SK-N-SH (cell line): ENCODE measurements at regions of chr4 and their contacts with region 1.

Region 1: DNA sequence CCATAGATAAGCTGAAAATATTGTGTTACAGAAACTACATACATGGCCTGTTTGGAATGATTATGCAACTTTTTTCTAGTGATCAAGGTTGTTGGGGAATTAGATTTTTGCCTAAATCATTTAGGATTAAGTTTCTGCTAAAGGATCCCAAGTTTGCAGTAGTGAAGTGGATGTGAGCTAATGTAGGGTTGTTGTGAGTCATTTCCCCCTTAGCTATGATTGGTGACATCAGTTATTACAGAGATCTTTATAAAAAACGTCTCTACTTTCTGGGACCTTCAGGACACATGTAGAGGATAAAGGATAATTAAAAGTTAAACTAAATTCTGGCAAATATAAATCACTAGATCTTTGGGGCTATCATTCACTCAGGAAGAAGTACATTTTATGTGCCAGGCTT is 133.3 kb downstream of the GATB start:
- DNase-seq: no peak
- H3K4me3 ChIP-seq: no peak overlapping the region
- H3K27ac ChIP-seq: no peak overlapping the region
- H3K4me1 ChIP-seq: peaks cover 0 to 12% of the 10 kb centered on the region in 2 experiments; a peak in 2 of 4 replicates
- H3K27me3 ChIP-seq: no peaks in the 10 kb centered on the region
- CTCF ChIP-seq: no peak
- EP300 ChIP-seq: no peak
- RAD21 ChIP-seq: no peak

Region 2: DNA sequence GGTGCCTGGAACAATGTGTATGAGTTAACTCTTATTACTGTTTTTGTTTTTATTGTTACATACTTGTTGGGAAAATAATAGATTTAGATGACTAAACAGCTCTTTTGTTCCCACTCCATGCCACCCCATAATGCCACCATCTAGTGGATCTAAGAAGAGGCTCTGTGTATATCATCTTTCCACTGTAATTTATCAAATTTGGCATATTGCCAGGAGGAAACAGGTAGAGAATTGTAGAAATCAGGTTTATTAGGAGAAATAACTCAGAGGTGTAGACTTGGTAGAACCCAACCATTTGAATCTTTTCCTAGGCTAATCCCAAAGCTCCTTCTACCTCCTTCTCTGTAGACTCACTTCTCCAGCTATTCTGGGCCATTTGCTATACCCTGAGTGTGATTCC is 17.3 kb before region 1 on chr4:
- CTCF ChIA-PET with region 1: no interaction called
- POLR2A ChIA-PET with region 1: no interaction called
- DNase-seq: no peak
- H3K4me3 ChIP-seq: no peak overlapping the region
- H3K27ac ChIP-seq: no peak overlapping the region
- H3K4me1 ChIP-seq: peaks cover 0 to 12% of the 10 kb centered on the region in 2 experiments; a peak in 2 of 4 replicates
- H3K27me3 ChIP-seq: no peaks in the 10 kb centered on the region
- CTCF ChIP-seq: no peak
- EP300 ChIP-seq: no peak
- RAD21 ChIP-seq: no peak

Region 3: GRCh38 chr4:151644622-151645021 is 17.1 kb after region 1 on chr4:
- CTCF ChIA-PET with region 1: interaction called, 10 read pairs
- POLR2A ChIA-PET with region 1: no interaction called
- DNase-seq: peak; percentile 57
- H3K4me3 ChIP-seq: no peak overlapping the region; a peak in 1 of 4 replicates
- H3K27ac ChIP-seq: no peak overlapping the region
- H3K4me1 ChIP-seq: peaks cover 0 to 6% of the 10 kb centered on the region in 2 experiments; a peak in 2 of 4 replicates
- H3K27me3 ChIP-seq: no peaks in the 10 kb centered on the region
- CTCF ChIP-seq: peak; percentile 56
- EP300 ChIP-seq: no peak
- RAD21 ChIP-seq: peak; percentile 59

Region 4: DNA sequence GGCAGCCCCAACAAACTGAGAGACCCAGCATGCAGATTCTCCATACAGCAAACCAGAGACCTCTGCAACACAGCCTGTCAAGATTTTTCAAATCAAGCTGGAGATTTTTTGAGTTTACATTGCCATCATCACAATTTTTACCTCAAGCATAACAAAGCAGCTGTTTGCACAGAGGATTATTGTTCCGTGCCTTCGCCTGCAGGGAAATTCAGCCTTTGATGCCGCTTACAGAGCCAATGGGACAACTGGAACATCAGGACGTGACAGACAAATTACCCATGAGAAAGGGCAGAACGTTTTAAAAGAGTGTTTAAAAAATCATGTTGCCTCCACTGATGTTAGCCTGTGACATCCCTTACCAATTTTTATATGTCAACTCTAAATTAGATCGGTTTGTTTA is 544.7 kb after region 1 on chr4:
- CTCF ChIA-PET with region 1: no interaction called
- POLR2A ChIA-PET with region 1: no interaction called
- DNase-seq: no peak
- H3K4me3 ChIP-seq: no peak overlapping the region
- H3K27ac ChIP-seq: no peak overlapping the region
- H3K4me1 ChIP-seq: no peaks in the 10 kb centered on the region; a peak in 1 of 4 replicates
- H3K27me3 ChIP-seq: no peaks in the 10 kb centered on the region
- CTCF ChIP-seq: no peak
- EP300 ChIP-seq: no peak
- RAD21 ChIP-seq: no peak